PC-9 (cell line): ENCODE measurements at regions of chr3 and their contacts with region 1.

Region 1: GRCh38 chr3:110727056-110727455 is 344.6 kb upstream of the NECTIN3 start:
- DNase-seq: no peak
- H3K4me3 ChIP-seq: no peak overlapping the region
- H3K27ac ChIP-seq: no peak overlapping the region
- H3K4me1 ChIP-seq: no peaks in the 10 kb centered on the region
- H3K27me3 ChIP-seq: no peaks in the 10 kb centered on the region
- CTCF ChIP-seq: no peak

Region 2: GRCh38 chr3:110711851-110712516 is 15.1 kb before region 1 on chr3:
- CTCF ChIA-PET with region 1: no interaction called
- POLR2A ChIA-PET with region 1: interaction called, 31 read pairs
- intact Hi-C with region 1: no loop called
- DNase-seq: no peak
- H3K4me3 ChIP-seq: no peak overlapping the region
- H3K27ac ChIP-seq: no peak overlapping the region
- H3K4me1 ChIP-seq: no peaks in the 10 kb centered on the region
- H3K27me3 ChIP-seq: no peaks in the 10 kb centered on the region
- CTCF ChIP-seq: no peak